Ascending aorta (tissue), 2 donors: ENCODE measurements at regions of chr9 and their contacts with region 1.

Region 1: GRCh38 chr9:20552874-20553575 is 69.3 kb downstream of the MLLT3 start:
- DNase-seq: no peak
- H3K4me3 ChIP-seq: no peak overlapping the region
- H3K27ac ChIP-seq: no peak overlapping the region
- H3K4me1 ChIP-seq: peaks cover 0 to 4% of the 10 kb centered on the region in 2 donors
- H3K27me3 ChIP-seq: no peaks in the 10 kb centered on the region
- CTCF ChIP-seq: peak in 2 of 3 experiments; percentile 26 to 30

Region 2: DNA sequence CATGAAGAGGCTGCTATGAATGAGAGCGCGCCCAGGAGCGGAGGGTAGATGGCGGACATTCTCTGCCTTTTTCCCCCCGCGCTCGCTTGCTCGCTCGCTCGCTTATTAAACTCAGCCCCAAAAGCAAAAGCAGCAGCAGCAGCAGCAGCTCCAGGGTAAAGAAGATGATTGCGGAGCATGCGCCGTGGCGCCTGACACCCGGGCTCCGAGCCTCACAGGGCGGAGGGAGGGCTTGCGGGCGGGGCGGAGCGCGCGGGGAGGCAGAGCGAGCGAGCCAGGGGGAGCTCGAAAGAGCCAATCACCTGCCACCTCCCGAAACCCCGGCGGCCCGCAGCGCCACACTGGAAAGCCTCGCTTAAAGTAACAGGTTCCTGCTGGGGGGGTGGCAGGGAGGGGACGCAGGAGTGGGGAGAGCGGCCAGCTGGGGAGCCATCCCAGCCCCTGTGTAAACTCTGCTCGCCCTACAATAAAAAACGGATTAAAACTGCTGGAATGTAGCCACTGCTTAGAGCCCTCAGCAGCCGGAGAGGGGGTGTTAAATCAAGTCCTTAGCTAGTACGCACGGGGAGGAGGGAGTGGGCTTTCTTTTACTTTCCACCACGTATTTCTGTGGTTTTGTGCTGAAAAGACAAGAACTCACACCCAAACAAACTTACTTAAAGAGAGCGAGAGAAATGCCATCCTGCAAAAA is 69.5 kb after region 1 on chr9 and contains the start of gene MLLT3:
- intact Hi-C with region 1: loop called (anchors 5 kb)
- DNase-seq: peak; percentile 82 to 98
- H3K4me3 ChIP-seq: peak within 1 kb of the TSS; percentile 89
- H3K27ac ChIP-seq: peak within 1 kb of the TSS; percentile 69 to 91
- H3K4me1 ChIP-seq: peaks cover 3 to 8% of the 10 kb centered on the region in 2 donors
- H3K27me3 ChIP-seq: no peaks in the 10 kb centered on the region
- CTCF ChIP-seq: no peak
- total RNA-seq, gene MLLT3: 16.8 TPM